ENCODE measurements at regions of chr7 and their contacts with region 1.

Region 1: GRCh38 chr7:149409895-149410294 is 51.0 kb downstream of the ZNF777 start:
- DNase-seq: no peak
- ATAC-seq: no peak
- H3K4me3 Mint-ChIP-seq: no peak overlapping the region
- H3K27ac Mint-ChIP-seq: no peak overlapping the region
- H3K4me1 Mint-ChIP-seq: peaks cover 8% of the 10 kb centered on the region
- H3K27me3 Mint-ChIP-seq: peaks cover 15% of the 10 kb centered on the region
- CTCF ChIP-seq: no peak

Region 2: GRCh38 chr7:149090397-149091195 is 319.3 kb before region 1 on chr7 and contains the start of gene ZNF786:
- CTCF ChIA-PET with region 1: no interaction called
- POLR2A ChIA-PET with region 1: no interaction called
- DNase-seq: peak; percentile 83
- ATAC-seq: peak; percentile 85
- H3K4me3 Mint-ChIP-seq: peak within 1 kb of the TSS; percentile 97
- H3K27ac Mint-ChIP-seq: peak within 1 kb of the TSS; percentile 99
- H3K4me1 Mint-ChIP-seq: peaks cover 12% of the 10 kb centered on the region
- H3K27me3 Mint-ChIP-seq: no peaks in the 10 kb centered on the region; the same call in 1 of the 2 replicates
- CTCF ChIP-seq: peak; percentile 75
- total RNA-seq, gene ZNF786: 11.4 to 13.0 TPM (median 11.8 TPM) in 3 replicates

Region 3: GRCh38 chr7:149284850-149285626 is 124.9 kb before region 1 on chr7:
- CTCF ChIA-PET with region 1: interaction called, 14 read pairs
- POLR2A ChIA-PET with region 1: no interaction called
- DNase-seq: peak; percentile 99
- ATAC-seq: peak; percentile 96
- H3K4me3 Mint-ChIP-seq: peak overlapping the region; percentile 98
- H3K27ac Mint-ChIP-seq: peak overlapping the region; percentile 70; the same call in 1 of the 2 replicates
- H3K4me1 Mint-ChIP-seq: peaks cover 17% of the 10 kb centered on the region
- H3K27me3 Mint-ChIP-seq: peaks cover 27% of the 10 kb centered on the region
- CTCF ChIP-seq: no peak

Region 4: DNA sequence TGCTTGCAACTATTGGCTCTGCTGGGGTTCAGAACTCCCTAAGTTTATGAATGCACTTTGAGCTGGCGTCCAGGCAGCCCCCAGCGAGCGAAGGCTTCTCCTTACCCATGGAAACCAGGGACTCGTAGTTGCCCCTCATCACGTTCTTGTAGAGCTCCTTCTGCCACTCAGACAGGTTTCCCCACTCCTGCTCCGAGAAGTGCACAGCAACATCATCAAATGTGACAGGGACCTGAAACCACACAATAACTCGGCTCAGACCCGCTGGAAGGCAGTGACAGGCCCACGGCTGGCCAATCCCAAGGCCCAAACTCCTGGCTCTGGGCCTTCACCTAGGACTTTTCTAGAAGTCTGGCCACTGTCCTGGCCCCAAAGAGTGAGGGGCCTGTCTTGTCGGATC is 44.1 kb after region 1 on chr7:
- CTCF ChIA-PET with region 1: no interaction called
- POLR2A ChIA-PET with region 1: no interaction called
- DNase-seq: no peak
- ATAC-seq: no peak
- H3K4me3 Mint-ChIP-seq: no peak overlapping the region
- H3K27ac Mint-ChIP-seq: no peak overlapping the region
- H3K4me1 Mint-ChIP-seq: peaks cover 10% of the 10 kb centered on the region
- H3K27me3 Mint-ChIP-seq: peaks cover 11% of the 10 kb centered on the region
- CTCF ChIP-seq: no peak